Activated CD4-positive, alpha-beta memory T cell treated with anti-CD3 and anti-CD28 coated beads, Interleukin-2, amount 10 ng/mL, durations not matched to agents 7 days and 5 days (primary cell): ENCODE measurements at regions of chr22 and their contacts with region 1.

Region 1: GRCh38 chr22:41800348-41801146 is at the start of gene CCDC134:
- DNase-seq: peak; percentile 93
- H3K4me3 Mint-ChIP-seq: peak within 1 kb of the TSS; percentile 91
- H3K27ac Mint-ChIP-seq: peak within 1 kb of the TSS; percentile 90
- H3K4me1 Mint-ChIP-seq: peaks cover 44% of the 10 kb centered on the region
- H3K27me3 Mint-ChIP-seq: no peaks in the 10 kb centered on the region
- total RNA-seq, gene CCDC134: 17.9 to 20.3 TPM

Region 2: DNA sequence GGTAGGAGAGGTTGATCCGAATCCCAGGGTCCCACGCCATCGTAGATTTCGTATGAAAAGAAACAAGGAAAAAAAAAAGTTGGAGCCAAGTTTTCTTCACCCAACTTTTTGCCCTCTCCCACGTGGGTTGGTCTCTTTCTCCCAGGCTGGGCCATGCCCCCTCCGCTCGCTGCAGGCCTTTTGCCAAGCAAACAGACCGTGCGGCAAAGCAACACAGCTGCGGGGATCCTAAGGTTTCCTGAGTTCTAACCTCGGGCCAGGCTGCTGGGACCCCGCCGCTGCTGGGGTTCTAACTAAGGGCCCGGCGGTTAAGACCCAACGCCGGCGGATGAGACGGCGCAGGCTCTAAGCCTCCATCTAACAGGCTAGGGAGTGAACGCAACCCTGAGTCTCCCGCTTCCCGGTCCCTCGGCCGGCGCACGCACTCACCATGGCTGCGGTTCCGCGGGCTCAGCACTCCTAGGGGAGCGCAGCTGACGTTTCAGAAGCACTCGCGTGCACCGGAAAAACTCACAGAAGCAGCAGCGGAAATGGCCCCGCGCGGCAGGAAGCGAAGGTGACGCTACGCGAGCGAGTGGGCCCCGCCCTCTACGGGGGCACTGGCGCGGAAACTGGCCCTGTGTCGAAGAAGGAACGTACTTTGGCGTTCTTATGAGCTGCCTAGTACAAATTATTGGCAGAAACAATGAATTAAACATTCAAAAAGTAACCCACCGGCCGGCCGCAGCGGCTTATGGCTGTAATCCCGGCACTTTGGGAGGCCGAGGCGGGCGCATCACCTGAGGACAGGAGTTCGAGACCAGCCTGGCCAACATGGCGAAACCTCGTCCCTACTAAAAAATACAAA is 112.0 kb before region 1 on chr22 and contains the start of gene SNU13:
- CTCF ChIA-PET with region 1: no interaction called
- POLR2A ChIA-PET with region 1: interaction called, 30 read pairs
- DNase-seq: peak; percentile 95
- H3K4me3 Mint-ChIP-seq: peak within 1 kb of the TSS; percentile 95
- H3K27ac Mint-ChIP-seq: peak within 1 kb of the TSS; percentile 92
- H3K4me1 Mint-ChIP-seq: peaks cover 40% of the 10 kb centered on the region
- H3K27me3 Mint-ChIP-seq: no peaks in the 10 kb centered on the region
- total RNA-seq, gene SNU13: 166 to 176 TPM

Region 3: GRCh38 chr22:41746567-41747400 is 53.8 kb before region 1 on chr22:
- CTCF ChIA-PET with region 1: interaction called, 44 read pairs
- POLR2A ChIA-PET with region 1: interaction called, 15 read pairs
- DNase-seq: peak; percentile 58
- H3K4me3 Mint-ChIP-seq: no peak overlapping the region
- H3K27ac Mint-ChIP-seq: no peak overlapping the region
- H3K4me1 Mint-ChIP-seq: peaks cover 11% of the 10 kb centered on the region
- H3K27me3 Mint-ChIP-seq: peaks cover 18% of the 10 kb centered on the region

Region 4: GRCh38 chr22:41786418-41786817 is 14.1 kb before region 1 on chr22:
- CTCF ChIA-PET with region 1: interaction called, 47 read pairs
- POLR2A ChIA-PET with region 1: interaction called, 366 read pairs
- DNase-seq: no peak
- H3K4me3 Mint-ChIP-seq: no peak overlapping the region
- H3K27ac Mint-ChIP-seq: no peak overlapping the region
- H3K4me1 Mint-ChIP-seq: peaks cover 44% of the 10 kb centered on the region
- H3K27me3 Mint-ChIP-seq: no peaks in the 10 kb centered on the region

Region 5: GRCh38 chr22:42079319-42080251 is 279.0 kb after region 1 on chr22 and contains the start of gene SMDT1:
- CTCF ChIA-PET with region 1: no interaction called
- POLR2A ChIA-PET with region 1: interaction called, 14 read pairs
- DNase-seq: peak; percentile 98
- H3K4me3 Mint-ChIP-seq: peak within 1 kb of the TSS; percentile 95
- H3K27ac Mint-ChIP-seq: peak within 1 kb of the TSS; percentile 92
- H3K4me1 Mint-ChIP-seq: peaks cover 42% of the 10 kb centered on the region
- H3K27me3 Mint-ChIP-seq: no peaks in the 10 kb centered on the region
- total RNA-seq, gene SMDT1: 92.7 to 98.1 TPM